ENCODE measurements at regions of chr13 and their contacts with region 1.

Region 1: GRCh38 chr13:98476538-98476966 is 100.4 kb downstream of the STK24 start:
- DNase-seq: peak; percentile 86
- H3K4me3 Mint-ChIP-seq: peak overlapping the region; percentile 74
- H3K27ac Mint-ChIP-seq: peak overlapping the region; percentile 97
- H3K4me1 Mint-ChIP-seq: peaks cover 73% of the 10 kb centered on the region
- H3K27me3 Mint-ChIP-seq: no peaks in the 10 kb centered on the region

Region 2: DNA sequence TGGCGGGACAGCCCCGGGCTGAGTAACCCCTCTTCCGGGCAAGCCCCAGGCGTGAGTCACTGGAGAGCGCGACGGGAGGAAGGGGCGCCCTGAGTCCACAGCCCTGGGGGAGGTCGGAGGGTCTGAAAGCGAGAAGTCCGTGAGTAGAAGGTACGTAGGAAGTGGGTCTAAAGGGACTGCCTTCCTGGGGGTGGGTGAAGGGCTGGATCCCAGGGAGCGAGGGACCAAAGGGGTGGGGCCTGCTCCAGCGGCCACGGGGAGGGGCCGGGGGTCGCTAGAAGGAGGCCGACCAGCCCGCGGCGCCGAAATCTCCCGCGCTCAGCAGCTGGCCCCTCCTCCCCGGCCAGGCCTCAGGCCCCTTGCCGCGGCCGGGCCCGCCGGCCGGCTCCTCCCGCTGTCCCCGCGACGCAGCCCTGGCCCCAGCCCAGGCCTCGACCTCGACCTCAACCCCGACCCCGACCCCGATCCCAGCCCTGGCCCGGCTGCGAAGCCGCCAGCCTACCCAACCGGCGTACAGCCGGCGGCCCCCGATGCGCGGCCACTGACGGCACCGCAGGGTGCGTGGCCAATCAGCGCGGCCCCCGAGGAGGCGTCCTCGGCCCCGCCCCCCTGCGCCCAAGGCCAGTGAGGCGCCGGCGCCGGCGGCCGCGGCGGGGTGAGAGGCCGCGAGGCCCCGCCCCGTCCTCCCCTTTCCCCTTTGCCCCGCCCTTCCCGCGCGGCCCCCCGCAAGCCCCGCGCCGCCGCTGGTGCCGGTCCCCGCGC is 500.5 kb before region 1 on chr13:
- intact Hi-C with region 1: loop called (anchors 10 kb)
- DNase-seq: peak; percentile 88
- H3K4me3 Mint-ChIP-seq: peak overlapping the region; percentile 93
- H3K27ac Mint-ChIP-seq: peak overlapping the region; percentile 98
- H3K4me1 Mint-ChIP-seq: peaks cover 33% of the 10 kb centered on the region
- H3K27me3 Mint-ChIP-seq: peaks cover 13% of the 10 kb centered on the region

Region 3: DNA sequence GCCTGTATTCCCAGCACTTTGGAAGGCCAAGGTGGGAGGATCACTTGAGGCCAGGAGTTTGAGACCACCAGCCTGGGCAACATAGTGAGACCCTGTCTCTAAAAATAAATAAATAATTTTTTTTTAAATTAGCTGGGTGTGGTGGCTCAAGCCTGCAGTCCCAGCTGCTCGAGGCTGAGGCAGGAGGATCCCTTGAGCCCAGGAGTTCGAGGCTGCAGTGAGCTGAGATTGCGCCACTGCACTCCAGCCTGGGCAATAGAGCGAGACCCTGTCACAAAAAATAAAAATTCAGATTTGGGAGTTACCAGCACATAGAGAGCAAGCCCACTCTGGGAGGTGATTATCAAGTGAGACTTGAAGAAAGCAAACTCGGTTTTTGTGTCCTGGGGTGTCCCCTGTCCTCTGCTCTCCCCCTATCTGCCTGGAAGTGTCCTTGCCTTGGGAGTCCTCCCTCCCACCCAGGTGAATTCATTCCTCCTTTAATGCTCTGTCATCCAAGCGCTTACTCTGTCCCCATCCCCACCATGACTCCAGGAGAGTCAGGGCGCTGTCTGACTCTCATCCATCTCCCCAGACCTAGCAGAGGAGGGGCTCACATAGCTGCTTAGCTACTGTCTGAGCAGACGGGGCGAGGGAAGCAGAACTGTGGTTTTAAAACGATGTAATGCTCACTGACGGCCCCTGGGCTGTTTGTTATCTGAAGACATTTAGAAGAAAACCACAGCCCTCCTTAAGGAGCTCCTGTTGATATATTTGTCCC is 46.4 kb before region 1 on chr13:
- intact Hi-C with region 1: no loop called
- DNase-seq: no peak
- H3K4me3 Mint-ChIP-seq: no peak overlapping the region
- H3K27ac Mint-ChIP-seq: no peak overlapping the region
- H3K4me1 Mint-ChIP-seq: no peaks in the 10 kb centered on the region
- H3K27me3 Mint-ChIP-seq: peaks cover 2% of the 10 kb centered on the region

Region 4: GRCh38 chr13:98509271-98510155 is 33.0 kb after region 1 on chr13:
- intact Hi-C with region 1: loop called (anchors 1 kb)
- DNase-seq: peak; percentile 31
- H3K4me3 Mint-ChIP-seq: peak overlapping the region; percentile 13
- H3K27ac Mint-ChIP-seq: peak overlapping the region; percentile 65
- H3K4me1 Mint-ChIP-seq: peaks cover 80% of the 10 kb centered on the region
- H3K27me3 Mint-ChIP-seq: no peaks in the 10 kb centered on the region

Region 5: GRCh38 chr13:98528663-98529570 is 52.4 kb after region 1 on chr13:
- intact Hi-C with region 1: loop called (anchors 1 kb)
- DNase-seq: no peak
- H3K4me3 Mint-ChIP-seq: peak overlapping the region; percentile 47
- H3K27ac Mint-ChIP-seq: peak overlapping the region; percentile 91
- H3K4me1 Mint-ChIP-seq: peaks cover 81% of the 10 kb centered on the region
- H3K27me3 Mint-ChIP-seq: no peaks in the 10 kb centered on the region

Region 6: GRCh38 chr13:98653463-98653985 is 177.0 kb after region 1 on chr13:
- intact Hi-C with region 1: loop called (anchors 1 kb)
- DNase-seq: peak; percentile 52
- H3K4me3 Mint-ChIP-seq: no peak overlapping the region
- H3K27ac Mint-ChIP-seq: no peak overlapping the region
- H3K4me1 Mint-ChIP-seq: peaks cover 4% of the 10 kb centered on the region
- H3K27me3 Mint-ChIP-seq: peaks cover 5% of the 10 kb centered on the region

Region 7: DNA sequence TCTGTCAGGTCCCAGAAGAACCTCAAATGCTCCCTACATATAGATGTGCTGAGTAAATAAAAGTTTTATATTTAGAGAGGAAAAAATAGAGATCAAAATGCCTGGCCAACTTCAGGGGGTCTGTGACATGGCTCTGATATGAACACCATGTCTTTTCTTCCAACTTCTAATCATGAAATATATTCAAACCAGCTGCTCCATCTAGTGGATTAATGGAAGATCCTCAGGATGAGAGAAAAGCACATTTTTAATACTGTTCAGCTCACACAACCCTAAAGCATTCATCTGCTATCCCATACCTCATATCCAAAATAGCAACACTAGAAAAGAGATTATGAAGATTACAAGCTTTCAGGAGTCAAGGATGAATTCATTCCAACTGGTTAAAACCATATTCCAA is 557.3 kb after region 1 on chr13:
- intact Hi-C with region 1: loop called (anchors 5 kb)
- DNase-seq: no peak
- H3K4me3 Mint-ChIP-seq: no peak overlapping the region
- H3K27ac Mint-ChIP-seq: no peak overlapping the region
- H3K4me1 Mint-ChIP-seq: peaks cover 23% of the 10 kb centered on the region
- H3K27me3 Mint-ChIP-seq: no peaks in the 10 kb centered on the region

Region 8: GRCh38 chr13:99087096-99087953 is 610.8 kb after region 1 on chr13:
- intact Hi-C with region 1: no loop called
- DNase-seq: peak; percentile 93
- H3K4me3 Mint-ChIP-seq: peak overlapping the region; percentile 97
- H3K27ac Mint-ChIP-seq: peak overlapping the region; percentile 98
- H3K4me1 Mint-ChIP-seq: peaks cover 39% of the 10 kb centered on the region
- H3K27me3 Mint-ChIP-seq: peaks cover 2% of the 10 kb centered on the region